ENCODE measurements at regions of chr20 and their contacts with region 1.

Region 1: DNA sequence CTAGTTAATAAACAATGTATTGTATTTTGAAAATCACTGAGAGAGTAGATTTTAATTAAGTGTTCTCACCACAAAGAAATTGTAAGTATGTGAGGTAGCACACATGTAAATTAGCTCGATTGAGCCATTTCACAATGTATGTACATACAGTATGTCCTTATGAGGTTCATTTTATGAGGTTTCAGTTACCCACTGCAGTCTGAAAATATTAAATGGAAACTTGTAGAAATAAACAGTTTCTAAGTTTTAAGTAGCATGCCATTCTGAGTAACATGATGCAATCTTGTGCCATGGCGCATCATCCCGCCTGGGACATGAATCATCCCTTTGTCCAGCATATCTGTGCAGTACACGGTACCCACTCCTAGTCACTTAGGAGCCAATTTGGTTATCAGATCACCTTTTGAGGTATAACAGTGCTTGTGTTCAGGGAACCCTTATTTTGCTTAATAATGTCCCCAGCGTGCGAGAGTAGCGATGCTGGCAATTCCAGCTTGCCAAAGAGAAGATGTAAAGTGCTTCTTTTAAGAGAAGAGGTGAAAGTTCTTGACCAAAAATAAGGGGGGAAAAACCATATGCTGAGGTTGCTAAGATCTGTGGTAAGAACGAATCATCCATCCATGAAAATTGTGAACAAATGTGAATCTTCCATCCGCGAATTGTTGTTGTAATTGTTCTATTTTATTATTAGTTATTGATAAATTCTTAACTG is 64.7 kb downstream of the KCNS1 start:
- DNase-seq: no peak
- ATAC-seq: no peak
- H3K4me3 ChIP-seq: no peak overlapping the region
- H3K4me3 Mint-ChIP-seq: peak overlapping the region in 2 of 10 donors; percentile 32 to 37
- H3K27ac ChIP-seq: no peak overlapping the region
- H3K27ac Mint-ChIP-seq: peak overlapping the region in 8 of 9 donors; percentile 36 to 89 (median 54)
- H3K4me1 ChIP-seq: peaks cover 41 to 54% of the 10 kb centered on the region in 2 donors
- H3K4me1 Mint-ChIP-seq: peaks cover 39 to 99% (median 90%) of the 10 kb centered on the region in 7 donors
- H3K27me3 ChIP-seq: no peaks in the 10 kb centered on the region
- H3K27me3 Mint-ChIP-seq: no peaks in the 10 kb centered on the region

Region 2: GRCh38 chr20:45020236-45020886 is 15.8 kb before region 1 on chr20:
- CTCF ChIA-PET with region 1: no interaction called
- POLR2A ChIA-PET with region 1: no interaction called
- intact Hi-C with region 1: loop called in 1 of 2 experiments (anchors 2 kb)
- DNase-seq: no peak
- ATAC-seq: no peak
- H3K4me3 ChIP-seq: no peak overlapping the region
- H3K4me3 Mint-ChIP-seq: peak overlapping the region in 2 of 10 donors; percentile 35 to 37
- H3K27ac ChIP-seq: no peak overlapping the region
- H3K27ac Mint-ChIP-seq: peak overlapping the region in 6 of 9 donors; percentile 29 to 91 (median 58)
- H3K4me1 ChIP-seq: peaks cover 15 to 20% of the 10 kb centered on the region in 2 donors
- H3K4me1 Mint-ChIP-seq: peaks cover 22 to 92% (median 85%) of the 10 kb centered on the region in 7 donors
- H3K27me3 ChIP-seq: no peaks in the 10 kb centered on the region
- H3K27me3 Mint-ChIP-seq: no peaks in the 10 kb centered on the region

Region 3: GRCh38 chr20:45052698-45053429 is 16.7 kb after region 1 on chr20:
- CTCF ChIA-PET with region 1: interaction called, 6 read pairs
- POLR2A ChIA-PET with region 1: no interaction called
- intact Hi-C with region 1: loop called in 1 of 2 experiments (anchors 2 kb)
- DNase-seq: peak in 5 of 9 donors; percentile 12 to 25 (median 17)
- ATAC-seq: peak; percentile 83
- H3K4me3 ChIP-seq: no peak overlapping the region
- H3K4me3 Mint-ChIP-seq: peak overlapping the region in 9 of 10 donors; percentile 17 to 61 (median 46)
- H3K27ac ChIP-seq: peak overlapping the region; percentile 43
- H3K27ac Mint-ChIP-seq: peak overlapping the region; percentile 17 to 89 (median 79)
- H3K4me1 ChIP-seq: peaks cover 48 to 56% of the 10 kb centered on the region in 2 donors
- H3K4me1 Mint-ChIP-seq: peaks cover 64 to 96% (median 90%) of the 10 kb centered on the region in 7 donors
- H3K27me3 ChIP-seq: no peaks in the 10 kb centered on the region
- H3K27me3 Mint-ChIP-seq: no peaks in the 10 kb centered on the region

Region 4: GRCh38 chr20:45077559-45077958 is 41.4 kb after region 1 on chr20:
- CTCF ChIA-PET with region 1: no interaction called
- POLR2A ChIA-PET with region 1: no interaction called
- intact Hi-C with region 1: loop called in 1 of 2 experiments (anchors 5 kb)
- DNase-seq: no peak
- ATAC-seq: no peak
- H3K4me3 ChIP-seq: no peak overlapping the region
- H3K4me3 Mint-ChIP-seq: no peak overlapping the region
- H3K27ac ChIP-seq: no peak overlapping the region
- H3K27ac Mint-ChIP-seq: no peak overlapping the region
- H3K4me1 ChIP-seq: no peaks in the 10 kb centered on the region
- H3K4me1 Mint-ChIP-seq: peaks cover 0 to 16% (median 6%) of the 10 kb centered on the region in 7 donors
- H3K27me3 ChIP-seq: no peaks in the 10 kb centered on the region
- H3K27me3 Mint-ChIP-seq: no peaks in the 10 kb centered on the region

Region 5: GRCh38 chr20:45128071-45128470 is 91.9 kb after region 1 on chr20:
- CTCF ChIA-PET with region 1: no interaction called
- POLR2A ChIA-PET with region 1: no interaction called
- intact Hi-C with region 1: no loop called
- DNase-seq: no peak
- ATAC-seq: no peak
- H3K4me3 ChIP-seq: no peak overlapping the region
- H3K4me3 Mint-ChIP-seq: no peak overlapping the region
- H3K27ac ChIP-seq: no peak overlapping the region
- H3K27ac Mint-ChIP-seq: no peak overlapping the region
- H3K4me1 ChIP-seq: no peaks in the 10 kb centered on the region
- H3K4me1 Mint-ChIP-seq: no peaks in the 10 kb centered on the region
- H3K27me3 ChIP-seq: peaks cover 0 to 4% of the 10 kb centered on the region in 2 donors
- H3K27me3 Mint-ChIP-seq: peaks cover 24 to 57% (median 44%) of the 10 kb centered on the region in 5 donors

Measured in naive thymus-derived CD4-positive, alpha-beta T cell (primary cell).